Activated CD8-positive, alpha-beta T cell treated with anti-CD3 and anti-CD28 coated beads for 36 hours (primary cell): ENCODE measurements at regions of chr6 and their contacts with region 1.

Region 1: DNA sequence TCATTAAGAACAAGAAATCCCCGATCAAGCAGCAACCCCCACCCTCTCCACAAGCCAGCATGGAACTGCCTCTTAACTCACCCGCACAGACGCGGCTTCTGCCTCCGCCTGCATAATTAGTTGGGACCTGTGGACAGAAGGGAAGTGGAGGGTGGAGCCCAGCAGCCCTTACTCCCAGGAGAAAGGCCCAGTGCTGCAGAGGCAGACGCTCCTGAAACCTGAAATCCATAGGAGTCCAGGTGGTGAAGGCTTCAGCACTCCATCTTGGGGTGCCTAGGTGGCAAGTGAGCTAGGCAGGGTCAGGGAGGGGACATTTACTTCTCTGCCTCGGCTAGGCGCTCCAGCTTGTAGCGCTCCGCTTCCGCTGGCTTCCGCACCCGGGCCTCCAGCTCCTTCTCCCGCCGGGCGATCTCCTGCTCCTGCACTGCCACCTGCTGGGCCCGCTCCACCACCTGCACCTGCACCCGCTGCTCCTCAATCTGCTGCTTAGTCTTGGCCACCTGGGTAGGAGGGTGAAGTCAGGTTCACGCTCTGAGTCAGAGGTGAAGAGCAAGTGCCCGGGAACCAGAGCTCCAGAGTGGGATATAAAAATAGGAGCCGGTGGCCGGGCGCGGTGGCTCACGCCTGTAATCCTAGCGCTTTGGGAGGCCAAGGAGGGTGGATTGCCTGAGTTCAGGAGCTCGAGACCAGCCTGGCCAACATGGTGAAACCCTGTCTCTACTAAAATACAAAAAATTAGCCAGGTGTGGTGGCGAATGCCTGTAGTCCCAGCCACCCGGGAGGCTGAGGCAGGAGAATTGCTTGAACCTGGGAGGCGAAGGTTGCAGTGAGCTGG is 10.7 kb downstream of the TUBB start:
- DNase-seq: peak; percentile 93
- ATAC-seq: peak; percentile 88
- H3K4me3 Mint-ChIP-seq: peak overlapping the region; percentile 54
- H3K27ac Mint-ChIP-seq: peak overlapping the region; percentile 44
- H3K4me1 Mint-ChIP-seq: peaks cover 46% of the 10 kb centered on the region
- H3K27me3 Mint-ChIP-seq: no peaks in the 10 kb centered on the region
- CTCF ChIP-seq: peak; percentile 75

Region 2: DNA sequence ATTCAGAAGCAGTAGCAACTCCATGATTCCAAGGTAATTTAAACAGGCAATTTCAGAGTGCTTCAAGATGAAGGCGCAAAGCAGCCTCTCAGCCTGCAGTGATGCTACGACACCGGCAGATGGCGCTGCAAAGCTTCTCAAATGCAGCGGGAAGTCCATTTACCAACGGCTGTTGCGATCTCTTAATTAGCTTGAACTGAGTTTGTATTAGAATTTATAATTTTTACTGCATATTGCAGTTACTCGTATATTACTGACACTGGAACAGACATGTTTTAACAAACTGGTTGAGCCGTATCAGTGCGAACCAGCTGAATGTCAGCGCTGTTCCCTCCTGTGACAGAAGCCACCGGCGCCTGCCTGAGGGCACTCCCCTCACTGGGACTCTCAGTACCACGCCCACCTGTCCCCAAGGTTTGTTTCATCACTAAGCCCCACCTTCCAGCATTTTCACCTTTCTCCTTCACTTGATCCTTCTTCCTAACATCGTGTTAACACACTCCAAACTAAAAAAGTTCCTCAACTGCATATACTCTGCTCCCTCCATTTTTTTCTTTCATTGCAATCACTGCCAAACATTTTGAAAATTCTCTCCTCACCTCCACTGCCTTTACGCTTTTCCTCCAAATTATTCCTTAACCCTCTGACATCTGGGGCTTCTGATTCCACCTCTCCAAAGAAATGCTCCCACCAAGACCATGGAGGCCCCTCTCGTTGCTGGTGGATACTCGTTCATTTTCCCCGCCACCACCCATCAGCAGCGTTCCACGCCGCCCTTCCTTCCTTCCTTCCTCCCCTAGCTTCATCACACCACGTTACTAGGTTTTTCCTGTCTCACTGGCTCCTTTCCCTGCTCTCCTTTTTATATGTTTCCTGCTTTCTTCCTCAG is 189.1 kb before region 1 on chr6:
- CTCF ChIA-PET with region 1: interaction called, 11 read pairs
- POLR2A ChIA-PET with region 1: no interaction called
- intact Hi-C with region 1: no loop called
- DNase-seq: peak; percentile 85
- ATAC-seq: peak; percentile 75
- H3K4me3 Mint-ChIP-seq: peak overlapping the region; percentile 71
- H3K27ac Mint-ChIP-seq: peak overlapping the region; percentile 77
- H3K4me1 Mint-ChIP-seq: peaks cover 36% of the 10 kb centered on the region
- H3K27me3 Mint-ChIP-seq: no peaks in the 10 kb centered on the region
- CTCF ChIP-seq: peak; percentile 98

Region 3: DNA sequence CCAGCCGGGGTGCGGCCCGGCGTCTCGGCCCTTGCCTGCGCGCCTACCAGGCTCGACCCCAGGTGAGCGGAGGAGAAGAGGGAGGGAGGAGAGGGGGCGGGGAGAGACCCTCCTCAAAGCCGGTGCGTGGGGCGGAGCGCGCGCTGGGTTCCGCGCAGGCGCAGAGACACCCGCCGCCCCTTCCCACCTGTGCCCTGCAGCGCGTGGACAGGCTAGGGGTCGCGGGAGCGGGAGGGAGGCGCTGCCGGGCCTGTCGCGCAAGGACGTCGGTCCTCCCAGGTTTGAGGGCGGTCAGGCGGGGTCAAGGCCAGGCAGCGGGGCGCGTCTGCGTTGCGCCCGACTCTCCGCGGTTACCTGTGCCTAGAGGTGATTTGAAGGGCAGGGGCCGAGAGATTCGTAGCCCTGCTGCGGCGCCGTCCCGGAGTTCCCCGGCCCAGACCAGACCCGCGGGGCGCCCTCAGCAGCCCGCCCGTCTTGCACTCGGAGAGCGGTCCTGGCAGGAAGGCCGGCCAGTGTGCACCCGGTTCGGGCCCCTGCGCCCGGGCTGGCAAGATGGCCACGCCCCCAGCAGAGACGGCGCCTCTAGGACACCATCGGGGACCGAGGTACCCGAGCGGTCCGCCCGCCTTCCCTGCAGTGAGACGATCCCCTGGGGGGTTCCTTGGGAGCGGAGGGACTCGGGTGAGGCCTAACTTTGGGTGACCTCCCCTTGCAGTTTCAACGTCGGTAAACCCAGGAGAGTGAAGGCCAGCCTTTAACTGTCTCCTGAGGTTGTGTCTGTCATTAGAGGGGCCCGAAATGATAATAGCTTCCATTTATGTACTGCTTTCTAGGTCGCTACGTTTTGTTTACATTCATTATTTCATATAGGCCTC is 83.3 kb before region 1 on chr6:
- CTCF ChIA-PET with region 1: interaction called, 14 read pairs
- POLR2A ChIA-PET with region 1: interaction called, 4 read pairs
- intact Hi-C with region 1: no loop called
- DNase-seq: peak; percentile 86
- ATAC-seq: peak; percentile 74
- H3K4me3 Mint-ChIP-seq: peak overlapping the region; percentile 90
- H3K27ac Mint-ChIP-seq: peak overlapping the region; percentile 92
- H3K4me1 Mint-ChIP-seq: peaks cover 20% of the 10 kb centered on the region
- H3K27me3 Mint-ChIP-seq: no peaks in the 10 kb centered on the region
- CTCF ChIP-seq: no peak

Region 4: GRCh38 chr6:30742316-30743098 is 11.7 kb after region 1 on chr6 and contains the start of gene FLOT1:
- CTCF ChIA-PET with region 1: interaction called, 24 read pairs
- POLR2A ChIA-PET with region 1: interaction called, 136 read pairs
- intact Hi-C with region 1: no loop called
- DNase-seq: peak; percentile 99
- ATAC-seq: peak; percentile 77
- H3K4me3 Mint-ChIP-seq: peak within 1 kb of the TSS; percentile 99
- H3K27ac Mint-ChIP-seq: peak within 1 kb of the TSS; percentile 94
- H3K4me1 Mint-ChIP-seq: peaks cover 67% of the 10 kb centered on the region
- H3K27me3 Mint-ChIP-seq: no peaks in the 10 kb centered on the region
- CTCF ChIP-seq: no peak
- total RNA-seq, gene FLOT1: 135 TPM

Region 5: GRCh38 chr6:30828027-30828960 is 97.5 kb after region 1 on chr6:
- CTCF ChIA-PET with region 1: interaction called, 10 read pairs
- POLR2A ChIA-PET with region 1: interaction called, 5 read pairs
- intact Hi-C with region 1: no loop called
- DNase-seq: peak; percentile 88
- ATAC-seq: peak; percentile 73
- H3K4me3 Mint-ChIP-seq: peak overlapping the region; percentile 84
- H3K27ac Mint-ChIP-seq: peak overlapping the region; percentile 96
- H3K4me1 Mint-ChIP-seq: peaks cover 66% of the 10 kb centered on the region
- H3K27me3 Mint-ChIP-seq: no peaks in the 10 kb centered on the region
- CTCF ChIP-seq: peak; percentile 86

Region 6: DNA sequence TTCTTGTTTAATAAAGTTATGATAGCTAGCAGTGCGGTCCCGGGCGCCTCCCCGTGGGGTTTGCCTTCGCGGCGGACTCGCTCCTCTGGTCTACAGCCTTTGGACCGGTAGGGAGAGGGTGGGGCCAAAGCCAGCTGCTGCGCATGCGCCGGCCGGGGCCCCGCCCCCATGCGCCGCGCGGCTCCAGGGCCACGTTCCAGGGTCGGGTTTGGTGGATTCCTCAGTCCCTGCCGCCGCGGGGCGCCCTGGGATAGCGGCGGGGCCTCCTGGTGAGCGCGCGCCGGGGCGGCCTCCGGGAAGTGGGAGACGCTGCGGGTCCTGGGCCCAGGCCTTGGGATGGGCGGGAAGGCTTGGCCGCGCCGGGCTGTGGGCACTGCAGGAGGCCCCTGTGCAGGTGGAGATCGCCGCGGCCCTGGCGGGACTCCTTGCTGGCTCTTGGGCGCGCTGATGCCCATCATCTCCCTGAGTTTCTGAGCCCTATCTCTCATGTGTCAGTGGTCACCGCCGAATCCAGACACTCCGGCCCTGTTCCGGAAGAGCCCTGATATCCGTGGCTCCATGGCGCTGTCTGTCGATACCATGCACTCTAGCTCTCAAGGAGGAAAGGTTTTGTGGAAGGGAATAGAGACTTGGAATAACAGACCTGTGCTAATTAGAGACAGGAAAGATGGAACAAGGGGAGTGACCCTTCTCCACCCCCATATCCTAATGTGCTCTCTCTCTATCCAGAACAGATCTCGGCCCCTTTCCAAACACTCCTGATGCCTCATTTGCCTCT is 183.4 kb after region 1 on chr6 and contains the start of gene VARS2:
- CTCF ChIA-PET with region 1: interaction called, 24 read pairs
- POLR2A ChIA-PET with region 1: interaction called, 3 read pairs
- intact Hi-C with region 1: no loop called
- DNase-seq: peak; percentile 89
- ATAC-seq: peak; percentile 96
- H3K4me3 Mint-ChIP-seq: peak within 1 kb of the TSS; percentile 80
- H3K27ac Mint-ChIP-seq: peak within 1 kb of the TSS; percentile 88
- H3K4me1 Mint-ChIP-seq: peaks cover 29% of the 10 kb centered on the region
- H3K27me3 Mint-ChIP-seq: no peaks in the 10 kb centered on the region
- CTCF ChIP-seq: no peak
- total RNA-seq, gene VARS2: 83.0 to 84.0 TPM